Activated CD8-positive, alpha-beta T cell treated with anti-CD3 and anti-CD28 coated beads for 36 hours (primary cell): ENCODE measurements at regions of chr2 and their contacts with region 1.

Region 1: DNA sequence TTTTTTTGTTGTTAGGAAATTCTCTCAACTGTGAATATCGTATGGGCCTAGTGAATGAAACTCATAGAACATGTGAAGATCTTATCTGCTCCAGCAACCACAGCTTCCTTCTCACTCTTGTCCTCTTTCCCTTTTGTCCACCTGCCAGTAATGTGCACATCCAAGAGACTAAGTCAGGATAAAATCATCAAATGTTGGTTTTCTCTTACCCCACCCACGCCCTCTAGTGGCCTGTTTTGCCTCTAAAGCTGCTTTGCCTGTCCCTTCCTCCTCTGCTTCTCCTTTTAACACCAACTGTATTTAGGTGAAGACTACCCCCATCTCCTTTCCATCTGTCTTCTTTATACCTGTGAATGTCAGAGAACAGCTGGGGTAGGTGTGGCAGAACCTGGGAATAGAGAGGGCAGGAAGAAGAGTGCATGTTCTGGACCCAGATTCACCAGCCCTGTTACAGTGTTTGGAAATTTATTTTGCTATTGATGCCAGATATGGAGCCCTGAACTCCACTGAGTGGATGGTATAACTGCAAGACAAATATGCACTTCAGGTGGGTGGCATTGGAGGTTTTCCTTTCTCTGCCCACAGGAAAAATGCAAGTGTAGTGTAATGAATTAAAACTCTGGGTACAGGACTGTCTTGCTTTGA is 8.4 kb upstream of the MGAT5 start:
- DNase-seq: peak; percentile 90
- ATAC-seq: peak; percentile 40
- H3K4me3 Mint-ChIP-seq: no peak overlapping the region
- H3K27ac Mint-ChIP-seq: peak overlapping the region; percentile 13
- H3K4me1 Mint-ChIP-seq: peaks cover 79% of the 10 kb centered on the region
- H3K27me3 Mint-ChIP-seq: no peaks in the 10 kb centered on the region
- CTCF ChIP-seq: peak; percentile 88

Region 2: GRCh38 chr2:134232868-134233727 is 12.4 kb before region 1 on chr2:
- CTCF ChIA-PET with region 1: interaction called, 104 read pairs
- POLR2A ChIA-PET with region 1: interaction called, 4 read pairs
- intact Hi-C with region 1: loop called (anchors 2 kb)
- DNase-seq: no peak
- ATAC-seq: peak; percentile 67
- H3K4me3 Mint-ChIP-seq: peak overlapping the region; percentile 2
- H3K27ac Mint-ChIP-seq: peak overlapping the region; percentile 90
- H3K4me1 Mint-ChIP-seq: peaks cover 78% of the 10 kb centered on the region
- H3K27me3 Mint-ChIP-seq: no peaks in the 10 kb centered on the region
- CTCF ChIP-seq: peak; percentile 19

Region 3: DNA sequence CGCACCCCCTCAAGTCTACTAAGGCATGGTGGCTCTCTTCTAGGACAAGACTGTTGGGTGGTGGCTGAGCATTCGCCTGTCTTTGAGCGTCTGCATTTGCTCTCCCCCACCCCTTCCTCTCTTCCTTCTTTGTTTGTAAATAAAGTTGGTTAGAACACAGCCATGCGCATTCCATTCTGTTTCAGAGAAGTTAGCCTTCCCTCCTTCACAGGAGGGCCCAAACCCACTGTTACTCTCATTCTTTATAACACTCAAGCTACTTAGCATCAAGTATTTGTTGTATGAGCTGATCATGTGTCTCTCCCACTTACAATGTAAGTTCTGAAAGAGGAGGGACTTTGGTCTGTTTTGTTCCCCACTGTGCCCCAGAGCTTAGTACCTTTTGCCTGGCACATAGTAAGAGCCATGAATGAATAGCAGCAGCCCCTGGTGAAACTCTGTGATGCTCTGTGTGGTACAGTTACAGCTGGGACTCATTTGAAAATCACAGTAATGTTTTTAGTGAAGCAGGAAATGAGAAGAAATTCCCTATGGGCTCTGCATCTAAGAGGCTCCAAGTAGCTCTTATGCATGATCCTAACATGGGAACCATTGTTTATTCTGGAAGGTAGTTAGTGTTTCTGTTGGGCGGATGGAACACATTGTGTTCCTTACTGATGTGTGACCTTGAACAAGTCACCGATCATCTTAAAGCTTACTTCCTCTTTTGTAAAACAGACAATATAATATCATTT is 16.1 kb after region 1 on chr2:
- CTCF ChIA-PET with region 1: interaction called, 13 read pairs
- POLR2A ChIA-PET with region 1: no interaction called
- intact Hi-C with region 1: no loop called
- DNase-seq: no peak
- ATAC-seq: no peak
- H3K4me3 Mint-ChIP-seq: no peak overlapping the region
- H3K27ac Mint-ChIP-seq: peak overlapping the region; percentile 2
- H3K4me1 Mint-ChIP-seq: peaks cover 67% of the 10 kb centered on the region
- H3K27me3 Mint-ChIP-seq: no peaks in the 10 kb centered on the region
- CTCF ChIP-seq: no peak

Region 4: DNA sequence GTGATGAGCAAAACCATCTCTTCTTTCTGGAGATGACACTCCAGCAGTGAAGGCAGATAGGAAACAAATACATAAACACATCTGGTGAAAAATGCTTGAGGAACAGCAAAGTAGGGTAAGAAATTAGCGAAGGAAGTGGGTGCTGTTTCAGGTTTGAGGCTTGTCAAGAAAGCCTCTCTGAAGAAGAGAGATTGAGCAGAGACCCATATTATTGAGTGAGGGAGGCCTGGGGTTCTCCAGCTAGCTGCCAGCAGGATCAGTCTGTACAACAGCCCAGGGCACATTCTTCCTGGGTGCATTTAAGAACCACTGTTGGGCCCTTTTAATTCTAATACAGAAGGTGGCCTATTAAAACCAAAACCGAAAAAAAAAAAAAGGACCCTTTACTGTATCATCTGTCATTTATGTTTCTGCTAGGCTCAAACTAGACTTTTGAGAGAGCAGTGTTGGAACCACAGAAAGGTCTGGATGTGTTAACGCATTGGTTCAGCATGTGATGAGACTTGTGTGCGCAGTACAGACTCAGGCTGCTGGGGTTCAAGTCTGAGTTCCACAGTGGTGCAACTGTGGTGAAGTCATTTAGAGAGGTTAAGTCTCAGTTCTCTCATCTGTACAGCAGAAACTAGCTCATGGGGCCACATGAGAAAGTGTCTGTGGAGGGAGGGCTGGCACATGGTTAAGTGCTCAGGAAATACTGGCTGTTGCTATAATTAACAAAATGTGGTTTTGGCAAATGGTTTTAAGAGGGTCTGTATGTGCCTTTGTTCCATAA is 37.4 kb after region 1 on chr2:
- CTCF ChIA-PET with region 1: interaction called, 25 read pairs
- POLR2A ChIA-PET with region 1: interaction called, 7 read pairs
- intact Hi-C with region 1: loop called (anchors 5 kb)
- DNase-seq: peak; percentile 82
- ATAC-seq: peak; percentile 93
- H3K4me3 Mint-ChIP-seq: peak overlapping the region; percentile 59
- H3K27ac Mint-ChIP-seq: peak overlapping the region; percentile 89
- H3K4me1 Mint-ChIP-seq: peaks cover 48% of the 10 kb centered on the region
- H3K27me3 Mint-ChIP-seq: no peaks in the 10 kb centered on the region
- CTCF ChIP-seq: no peak